GM10248 (cell line): ENCODE measurements at regions of chr6 and their contacts with region 1.

Region 1: DNA sequence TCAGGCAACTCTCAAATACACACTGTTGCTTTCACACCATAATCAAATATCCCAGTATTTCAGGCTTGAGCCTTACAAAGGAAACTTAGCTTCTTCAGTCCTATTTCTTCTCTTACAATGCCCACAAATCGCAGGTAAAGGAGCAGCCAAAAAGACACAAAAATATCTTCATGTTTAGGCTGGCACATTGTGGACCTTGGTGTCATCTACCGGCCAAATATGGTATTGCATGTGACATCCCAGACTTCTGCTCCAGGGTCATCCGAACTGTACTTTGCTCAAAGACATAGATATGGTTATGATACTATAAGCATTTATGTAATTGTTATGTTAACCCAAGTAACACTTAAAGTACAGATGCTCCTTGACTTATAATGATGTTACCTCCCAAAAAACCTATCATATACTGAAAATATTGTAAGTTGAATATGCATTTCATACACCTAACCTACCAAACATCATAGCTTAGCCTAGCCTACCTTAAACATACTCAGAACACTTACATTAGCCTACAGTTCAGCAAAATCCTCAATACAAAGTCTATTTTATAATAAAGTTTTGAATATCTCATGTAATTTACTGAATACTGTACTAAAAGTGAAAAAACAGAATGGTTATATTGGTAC is 4.6 kb downstream of the OR2H2 start:
- DNase-seq: peak; percentile 58
- CTCF ChIP-seq: peak; percentile 88

Region 2: GRCh38 chr6:29376003-29376402 is 213.5 kb before region 1 on chr6:
- CTCF ChIA-PET with region 1: interaction called, 30 read pairs
- POLR2A ChIA-PET with region 1: no interaction called
- DNase-seq: peak; percentile 19
- CTCF ChIP-seq: peak; percentile 7

Region 3: GRCh38 chr6:29577544-29577943 is 12.0 kb before region 1 on chr6:
- CTCF ChIA-PET with region 1: interaction called, 14 read pairs
- POLR2A ChIA-PET with region 1: no interaction called
- DNase-seq: no peak
- CTCF ChIP-seq: no peak